ENCODE measurements at regions of chr15 and their contacts with region 1.

Region 1: DNA sequence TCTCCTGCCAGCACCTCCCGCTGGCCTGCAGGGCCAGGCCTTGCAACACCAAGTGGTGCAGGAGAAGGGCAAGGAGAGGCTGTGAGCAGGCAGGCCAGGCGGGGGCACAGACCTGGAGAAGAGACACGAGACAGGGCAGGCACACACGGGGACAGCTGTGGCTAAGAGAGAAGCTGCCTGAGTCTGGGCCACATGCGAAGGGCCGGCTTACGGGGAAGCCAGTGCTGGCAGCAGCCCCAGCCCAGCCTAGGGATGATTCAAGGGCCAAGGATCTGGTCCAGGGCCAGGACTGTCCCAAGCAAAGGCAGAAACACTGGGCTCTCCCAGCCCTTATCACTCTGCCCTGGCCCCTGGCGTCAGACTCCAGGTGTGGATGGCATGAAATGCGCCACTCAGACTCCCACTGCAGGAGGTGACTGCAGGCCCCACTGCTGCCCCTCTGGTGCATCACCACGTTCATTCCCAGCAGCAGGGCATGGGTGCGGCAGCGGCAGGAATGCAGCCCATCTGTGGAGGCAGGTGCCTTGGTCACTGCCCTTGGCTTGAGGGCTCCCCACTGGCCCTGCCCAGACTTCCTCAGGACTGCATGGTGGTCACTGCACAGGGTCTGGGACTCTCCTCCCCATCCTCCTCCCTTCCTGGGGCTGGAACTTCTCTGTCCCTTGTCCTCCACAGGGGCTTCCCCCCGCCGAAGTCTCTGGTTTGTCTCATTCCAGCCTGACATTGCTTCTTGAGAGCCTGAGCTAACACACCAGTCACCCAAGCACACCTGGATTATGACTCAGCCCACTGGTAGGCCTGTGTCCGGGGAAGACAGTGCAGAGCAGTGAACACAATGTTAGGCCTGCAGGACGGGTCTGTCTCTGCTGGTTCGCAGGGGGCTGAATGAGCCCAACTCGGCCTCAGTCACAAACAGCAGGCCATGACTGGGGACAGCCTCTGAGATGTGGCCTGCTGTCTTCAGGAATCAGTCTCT is 69.3 kb downstream of the TBC1D2B start:
- DNase-seq: no peak
- CTCF ChIP-seq: no peak

Region 2: GRCh38 chr15:77784395-77785292 is 223.6 kb before region 1 on chr15:
- CTCF ChIA-PET with region 1: no interaction called
- POLR2A ChIA-PET with region 1: no interaction called
- DNase-seq: peak; percentile 65
- CTCF ChIP-seq: peak; percentile 39

Region 3: GRCh38 chr15:77983708-77984445 is 24.3 kb before region 1 on chr15:
- CTCF ChIA-PET with region 1: no interaction called
- POLR2A ChIA-PET with region 1: no interaction called
- DNase-seq: no peak
- CTCF ChIP-seq: no peak

Region 4: GRCh38 chr15:78018946-78019644 is 10.9 kb after region 1 on chr15:
- CTCF ChIA-PET with region 1: interaction called, 13 read pairs
- POLR2A ChIA-PET with region 1: no interaction called
- DNase-seq: peak; percentile 48
- CTCF ChIP-seq: no peak

Region 5: GRCh38 chr15:78149068-78149804 is 141.0 kb after region 1 on chr15 and contains the start of gene IDH3A:
- CTCF ChIA-PET with region 1: no interaction called
- POLR2A ChIA-PET with region 1: no interaction called
- DNase-seq: peak; percentile 99
- CTCF ChIP-seq: no peak

Measured in GM10248 (cell line).